ENCODE measurements at regions of chr11 and their contacts with region 1.

Region 1: DNA sequence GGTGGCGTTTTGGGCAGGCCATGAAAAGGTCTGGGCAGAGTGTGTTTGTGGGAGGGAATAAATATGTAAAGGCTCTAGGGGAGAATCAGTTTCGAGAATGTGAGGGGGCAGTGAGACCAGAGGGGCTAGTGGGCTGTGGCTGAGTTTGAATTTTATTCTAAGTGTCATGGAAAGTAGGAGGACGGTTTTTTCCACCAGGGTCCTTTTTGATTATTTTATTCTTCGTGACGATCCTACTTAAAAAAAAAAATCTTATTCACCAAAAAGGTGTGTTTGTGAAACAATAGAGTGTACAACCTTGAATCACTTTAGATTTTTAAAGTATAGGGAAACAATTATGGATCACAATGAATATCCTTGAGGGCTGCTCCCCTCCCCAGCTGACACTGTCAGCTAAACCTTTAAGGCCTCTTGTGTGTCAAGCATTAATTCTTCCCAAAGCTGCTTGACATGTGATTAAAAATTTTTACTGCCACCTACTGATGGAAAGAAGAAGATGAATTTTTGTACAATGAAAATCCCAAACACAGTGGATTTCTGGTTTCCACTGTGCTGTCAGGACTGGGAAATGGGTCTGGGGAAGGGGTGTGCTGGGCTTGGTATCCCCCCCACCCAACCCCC is 107.5 kb upstream of the OR4B1 start:
- DNase-seq: no peak
- ATAC-seq: no peak; the same call in 1 of the 2 replicates
- H3K4me3 Mint-ChIP-seq: no peak overlapping the region
- H3K27ac Mint-ChIP-seq: peak overlapping the region; percentile 54
- H3K4me1 Mint-ChIP-seq: peaks cover 17% of the 10 kb centered on the region
- H3K27me3 Mint-ChIP-seq: no peaks in the 10 kb centered on the region
- CTCF ChIP-seq: no peak

Region 2: DNA sequence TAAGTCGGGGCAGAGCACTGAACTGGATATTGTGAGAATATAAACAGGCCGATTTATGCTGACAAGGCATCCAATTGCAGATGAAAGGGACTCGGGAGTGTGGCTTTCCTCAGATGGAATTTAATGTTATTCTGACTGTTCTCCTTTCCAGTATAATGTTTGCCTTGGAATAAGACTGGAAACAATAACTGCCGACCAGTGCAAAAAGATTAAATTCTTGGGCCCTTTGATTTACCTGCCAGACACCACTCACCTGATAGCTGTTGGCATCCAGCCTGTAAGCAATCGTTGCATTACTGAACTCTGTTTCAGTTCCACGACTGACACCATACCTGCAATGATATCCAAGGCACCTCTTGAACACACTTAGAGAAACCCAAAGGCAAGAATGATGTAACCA is 271.9 kb before region 1 on chr11:
- CTCF ChIA-PET with region 1: no interaction called
- POLR2A ChIA-PET with region 1: no interaction called
- DNase-seq: no peak
- ATAC-seq: no peak
- H3K4me3 Mint-ChIP-seq: no peak overlapping the region
- H3K27ac Mint-ChIP-seq: no peak overlapping the region
- H3K4me1 Mint-ChIP-seq: no peaks in the 10 kb centered on the region
- H3K27me3 Mint-ChIP-seq: no peaks in the 10 kb centered on the region
- CTCF ChIP-seq: no peak

Region 3: DNA sequence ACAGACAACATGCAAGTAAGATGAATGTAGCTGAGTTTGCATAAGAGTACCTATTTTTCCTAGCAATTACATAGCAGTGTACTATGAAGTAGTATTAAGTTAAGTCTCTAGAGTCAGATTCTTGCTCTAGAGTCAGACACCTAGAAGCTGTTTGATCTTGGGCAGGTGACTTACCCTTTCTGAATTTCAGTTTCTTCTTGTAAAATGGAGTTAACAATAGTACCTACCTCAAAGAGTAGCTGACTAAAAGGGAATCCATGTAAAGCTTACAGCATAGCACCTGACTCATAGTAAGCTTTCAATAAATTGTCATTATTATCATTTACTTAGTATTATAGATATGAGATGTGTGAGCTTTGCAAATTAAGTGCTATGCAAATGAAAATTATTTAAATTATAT is 176.6 kb before region 1 on chr11:
- CTCF ChIA-PET with region 1: interaction called, 60 read pairs
- POLR2A ChIA-PET with region 1: no interaction called
- DNase-seq: no peak
- ATAC-seq: no peak
- H3K4me3 Mint-ChIP-seq: no peak overlapping the region
- H3K27ac Mint-ChIP-seq: no peak overlapping the region
- H3K4me1 Mint-ChIP-seq: peaks cover 6% of the 10 kb centered on the region
- H3K27me3 Mint-ChIP-seq: no peaks in the 10 kb centered on the region
- CTCF ChIP-seq: no peak

Region 4: DNA sequence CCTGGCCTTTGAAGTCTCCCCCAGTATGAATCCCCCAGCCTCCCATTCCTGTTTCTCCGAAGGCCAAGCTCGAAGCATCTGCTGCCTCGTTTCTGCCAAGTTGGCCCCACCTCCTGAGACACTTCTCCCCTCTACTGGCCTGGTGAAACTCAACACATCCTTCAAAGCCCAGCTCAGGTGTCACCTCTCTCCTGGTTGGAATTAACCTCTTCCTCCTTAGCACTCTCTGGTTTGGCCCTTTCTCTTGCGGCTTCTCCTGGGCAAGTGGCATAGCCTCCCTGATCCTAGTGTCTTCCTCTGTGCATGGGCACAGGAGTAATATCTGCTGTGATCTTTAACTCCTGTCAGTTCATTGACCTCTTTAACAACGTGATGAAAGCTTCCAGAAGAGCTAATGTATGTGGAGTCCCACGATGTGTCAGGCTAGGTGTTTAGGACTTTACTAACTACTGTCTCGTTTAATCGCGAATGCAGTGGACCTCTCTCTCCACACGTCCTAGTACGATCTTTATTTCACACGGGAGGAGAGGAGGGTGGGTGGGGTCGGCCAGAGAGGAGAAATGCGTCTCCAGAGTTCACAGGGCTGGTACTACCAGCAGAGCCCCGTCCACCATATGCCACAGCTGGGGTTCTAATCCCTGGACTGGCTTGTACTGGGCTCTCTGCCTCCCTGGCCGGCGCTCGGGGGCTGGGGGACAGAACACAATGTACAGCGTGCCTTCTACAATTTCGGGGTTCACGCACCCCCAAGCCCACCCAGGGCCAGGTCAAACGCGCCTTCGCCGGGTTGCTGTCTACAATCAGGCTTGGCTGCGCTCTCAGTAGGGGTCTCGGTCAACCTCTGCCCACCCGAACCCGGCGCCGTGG is 129.5 kb before region 1 on chr11:
- CTCF ChIA-PET with region 1: interaction called, 14 read pairs
- POLR2A ChIA-PET with region 1: no interaction called
- DNase-seq: peak; percentile 44
- ATAC-seq: peak; percentile 58
- H3K4me3 Mint-ChIP-seq: peak overlapping the region; percentile 64
- H3K27ac Mint-ChIP-seq: peak overlapping the region; percentile 85
- H3K4me1 Mint-ChIP-seq: peaks cover 30% of the 10 kb centered on the region
- H3K27me3 Mint-ChIP-seq: peaks cover 8% of the 10 kb centered on the region
- CTCF ChIP-seq: no peak

Region 5: DNA sequence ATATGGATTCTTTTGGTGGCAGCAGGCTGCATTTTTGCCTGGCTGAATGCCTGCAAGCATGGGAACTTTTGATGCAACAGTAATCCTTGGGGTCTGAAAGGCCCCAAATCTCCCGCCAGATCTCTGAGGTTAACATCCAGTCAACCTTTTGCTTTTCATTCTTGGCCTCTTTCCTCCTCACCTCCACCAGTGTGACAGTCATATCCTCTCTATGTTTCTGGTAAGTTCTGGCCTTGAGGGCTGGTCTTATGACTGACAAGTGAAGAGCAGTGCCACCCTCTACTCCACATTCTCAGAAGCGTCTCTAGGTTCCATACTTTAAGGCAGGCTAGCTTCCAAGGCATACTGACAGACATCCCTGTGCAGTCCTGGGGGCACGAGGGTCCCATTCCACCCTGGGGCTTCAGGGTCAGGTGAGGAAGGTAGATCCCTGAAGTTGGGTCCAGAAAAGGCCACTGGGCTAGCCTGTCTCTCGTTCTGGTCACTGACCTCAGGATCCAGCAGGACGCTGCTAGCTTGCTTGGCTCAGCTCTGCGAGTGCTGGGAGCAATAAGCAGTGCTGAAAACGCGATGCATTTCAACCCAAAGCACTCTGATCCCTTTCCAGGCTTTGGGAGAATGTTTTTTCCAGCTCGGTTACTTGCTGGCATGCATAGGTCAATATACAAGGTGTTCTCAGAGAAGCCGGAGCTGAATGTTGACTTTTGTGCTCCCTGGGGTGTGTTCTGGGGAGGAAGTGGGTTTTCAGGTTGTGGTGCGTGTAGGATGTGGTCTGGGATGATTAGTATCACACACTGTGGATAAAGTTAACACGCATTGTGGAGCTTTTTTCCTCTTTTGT is 53.6 kb before region 1 on chr11:
- CTCF ChIA-PET with region 1: interaction called, 11 read pairs
- POLR2A ChIA-PET with region 1: no interaction called
- DNase-seq: no peak
- ATAC-seq: peak; percentile 40
- H3K4me3 Mint-ChIP-seq: no peak overlapping the region
- H3K27ac Mint-ChIP-seq: peak overlapping the region; percentile 79
- H3K4me1 Mint-ChIP-seq: peaks cover 63% of the 10 kb centered on the region
- H3K27me3 Mint-ChIP-seq: no peaks in the 10 kb centered on the region
- CTCF ChIP-seq: no peak

Region 6: DNA sequence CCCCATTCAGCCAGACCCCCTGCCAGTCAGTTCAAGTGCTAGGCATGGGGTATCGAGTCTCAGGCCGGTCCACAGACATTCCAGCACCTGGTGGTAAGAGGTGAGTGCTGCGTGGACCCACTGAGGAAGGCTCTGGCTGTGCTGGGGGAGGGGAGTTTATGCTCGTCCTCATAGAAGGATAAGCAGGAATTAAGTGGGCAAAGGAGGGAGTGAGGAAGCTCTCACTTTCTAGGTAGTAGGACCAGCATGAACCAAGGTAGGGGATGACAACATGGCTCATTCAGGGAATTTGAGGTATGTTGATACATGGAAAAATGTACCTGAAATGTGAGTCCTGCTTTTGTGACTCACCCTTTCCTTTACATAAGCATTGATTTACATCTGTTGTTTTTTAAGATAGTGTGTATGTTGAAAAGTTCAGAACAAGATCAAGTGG is 12.1 kb before region 1 on chr11:
- CTCF ChIA-PET with region 1: interaction called, 10 read pairs
- POLR2A ChIA-PET with region 1: no interaction called
- DNase-seq: no peak
- ATAC-seq: peak; percentile 75
- H3K4me3 Mint-ChIP-seq: no peak overlapping the region
- H3K27ac Mint-ChIP-seq: peak overlapping the region; percentile 83
- H3K4me1 Mint-ChIP-seq: peaks cover 39% of the 10 kb centered on the region
- H3K27me3 Mint-ChIP-seq: no peaks in the 10 kb centered on the region
- CTCF ChIP-seq: no peak

Measured in WTC11 (cell line).